Heart right ventricle (tissue), 16 donors: ENCODE measurements at regions of chr7 and their contacts with region 1.

Region 1: DNA sequence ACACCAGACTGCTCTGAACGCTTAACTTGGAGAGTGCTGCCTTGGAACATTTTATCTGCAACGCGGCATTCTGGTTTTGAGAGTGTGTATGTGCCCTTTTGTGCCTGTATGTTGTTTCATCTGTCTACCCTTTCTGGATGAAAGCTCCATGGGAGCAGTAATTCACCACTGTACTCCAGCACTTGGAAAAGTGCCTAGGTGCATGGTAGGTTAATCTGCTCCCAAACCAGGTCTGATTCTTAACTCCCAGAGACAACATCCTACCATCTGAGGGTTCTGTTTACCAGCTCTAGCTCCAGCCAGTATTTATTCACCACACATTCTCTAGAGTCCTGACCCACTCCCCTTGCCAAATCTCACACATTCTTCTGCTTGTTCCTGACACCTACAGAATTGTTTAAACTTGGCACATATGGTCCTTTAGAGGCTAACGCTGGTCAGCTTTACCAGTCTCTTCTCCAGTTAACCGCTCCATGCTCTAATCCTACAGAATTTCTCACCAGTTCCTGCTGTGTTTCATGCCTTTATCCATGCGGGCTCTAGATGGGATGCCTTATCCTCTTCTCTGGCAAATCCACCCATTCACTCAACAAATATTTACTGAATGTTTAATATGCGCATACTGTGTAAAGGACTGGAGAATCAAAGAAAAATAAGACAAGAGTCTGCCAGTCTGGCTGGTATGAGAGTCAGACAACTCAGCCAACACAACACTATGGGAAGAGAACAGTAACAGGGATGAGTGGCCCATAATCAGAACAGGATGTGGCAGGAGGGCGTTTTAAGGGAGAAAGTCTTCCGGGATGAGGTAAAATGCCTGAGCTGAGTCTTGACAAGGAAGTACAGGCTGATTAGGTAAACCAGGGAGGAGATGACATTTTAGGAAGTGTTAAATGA is 46.3 kb downstream of the MTPN start:
- DNase-seq: peak in 1 of 2 donors; percentile 16
- ATAC-seq: peak; percentile 41 to 91 (median 72)
- H3K4me3 ChIP-seq: no peak overlapping the region
- H3K27ac ChIP-seq: peak overlapping the region; percentile 31 to 73 (median 66)
- H3K4me1 ChIP-seq: peaks cover 2 to 80% (median 46%) of the 10 kb centered on the region in 9 donors
- H3K27me3 ChIP-seq: no peaks in the 10 kb centered on the region
- CTCF ChIP-seq: no peak

Region 2: GRCh38 chr7:135811506-135811905 is 119.3 kb before region 1 on chr7:
- intact Hi-C with region 1: no loop called
- DNase-seq: no peak
- ATAC-seq: no peak
- H3K4me3 ChIP-seq: no peak overlapping the region
- H3K27ac ChIP-seq: no peak overlapping the region
- H3K4me1 ChIP-seq: peaks cover 0 to 16% (median 11%) of the 10 kb centered on the region in 9 donors
- H3K27me3 ChIP-seq: no peaks in the 10 kb centered on the region
- CTCF ChIP-seq: no peak

Region 3: GRCh38 chr7:135831455-135832195 is 99.2 kb before region 1 on chr7:
- intact Hi-C with region 1: no loop called
- DNase-seq: no peak
- ATAC-seq: no peak
- H3K4me3 ChIP-seq: no peak overlapping the region
- H3K27ac ChIP-seq: no peak overlapping the region
- H3K4me1 ChIP-seq: peaks cover 0 to 27% (median 8%) of the 10 kb centered on the region in 9 donors
- H3K27me3 ChIP-seq: no peaks in the 10 kb centered on the region
- CTCF ChIP-seq: no peak

Region 4: GRCh38 chr7:135970682-135971365 is 40.0 kb after region 1 on chr7:
- intact Hi-C with region 1: loop called in 1 of 10 experiments (anchors 5 kb)
- DNase-seq: no peak
- ATAC-seq: no peak
- H3K4me3 ChIP-seq: peak overlapping the region in 1 of 10 donors; percentile 16
- H3K27ac ChIP-seq: peak overlapping the region in 1 of 10 donors; percentile 77
- H3K4me1 ChIP-seq: peaks cover 3 to 83% (median 48%) of the 10 kb centered on the region in 9 donors
- H3K27me3 ChIP-seq: no peaks in the 10 kb centered on the region
- CTCF ChIP-seq: no peak